Activated T-helper 1 cell treated with anti-CD3 and anti-CD28 coated beads, Interleukin-12 subunit alpha, Interleukin-12 subunit beta, Interleukin-2, Interleukin-4 antibody, amounts not matched to agents 30 ng/mL and 10 ng/mL and 1 ng/mL, durations not matched to agents 14 hours and 24 hours and 36 hours (primary cell): ENCODE measurements at regions of chr4 and their contacts with region 1.

Region 1: DNA sequence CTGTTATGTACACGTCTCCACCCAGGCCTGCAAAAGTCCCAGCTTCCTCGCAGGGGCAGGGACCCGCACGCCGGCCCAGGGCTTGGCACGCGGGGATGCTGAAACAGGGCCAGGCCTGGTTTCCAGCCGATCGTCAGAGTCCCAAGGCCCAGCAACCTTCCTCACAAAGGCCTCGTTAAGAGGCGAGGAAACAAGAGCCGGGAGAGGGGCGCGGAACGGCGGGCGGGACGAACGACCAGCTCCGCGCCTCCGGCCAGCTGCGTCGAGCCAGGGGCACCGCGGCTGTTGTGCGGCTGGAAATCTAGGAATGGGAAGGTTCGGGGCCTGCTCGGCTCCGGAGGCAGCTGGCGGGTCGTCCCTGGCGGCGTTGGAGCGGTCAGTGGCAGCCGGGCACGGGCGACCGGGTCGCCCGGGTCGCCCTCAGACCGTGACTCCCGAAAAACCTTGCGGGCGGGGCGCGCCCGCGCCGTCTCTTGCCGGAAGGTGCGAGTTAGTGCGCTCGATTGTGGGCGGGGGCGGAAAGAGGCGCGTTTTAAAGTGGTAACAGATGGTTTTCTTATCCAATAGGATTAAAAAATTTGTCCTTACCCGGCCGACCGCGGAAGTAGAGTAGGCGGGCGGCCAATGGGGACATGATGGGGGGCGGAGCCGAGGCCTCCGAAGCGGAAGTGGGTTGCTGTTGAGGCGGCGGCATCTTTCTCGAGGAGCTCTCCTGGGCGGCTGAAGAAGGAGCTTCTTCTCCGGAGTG is at the start of gene RNF4:
- DNase-seq: peak; percentile 94
- H3K4me3 Mint-ChIP-seq: peak within 1 kb of the TSS; percentile 95
- H3K27ac Mint-ChIP-seq: peak within 1 kb of the TSS; percentile 96
- H3K4me1 Mint-ChIP-seq: peaks cover 29% of the 10 kb centered on the region
- H3K27me3 Mint-ChIP-seq: peaks cover 1% of the 10 kb centered on the region
- total RNA-seq, gene RNF4: 93.7 and 112 TPM in 2 replicates

Region 2: GRCh38 chr4:1721004-1721665 is 747.5 kb before region 1 on chr4 and contains the starts of genes TACC3 and TMEM129:
- intact Hi-C with region 1: loop called (anchors 2 kb)
- DNase-seq: peak; percentile 90
- H3K4me3 Mint-ChIP-seq: peak within 1 kb of the TSS; percentile 94
- H3K27ac Mint-ChIP-seq: peak within 1 kb of the TSS; percentile 97
- H3K4me1 Mint-ChIP-seq: peaks cover 45% of the 10 kb centered on the region
- H3K27me3 Mint-ChIP-seq: no peaks in the 10 kb centered on the region
- total RNA-seq, gene TACC3: 134 and 139 TPM in 2 replicates
- total RNA-seq, gene TMEM129: 27.4 and 28.4 TPM in 2 replicates

Region 3: DNA sequence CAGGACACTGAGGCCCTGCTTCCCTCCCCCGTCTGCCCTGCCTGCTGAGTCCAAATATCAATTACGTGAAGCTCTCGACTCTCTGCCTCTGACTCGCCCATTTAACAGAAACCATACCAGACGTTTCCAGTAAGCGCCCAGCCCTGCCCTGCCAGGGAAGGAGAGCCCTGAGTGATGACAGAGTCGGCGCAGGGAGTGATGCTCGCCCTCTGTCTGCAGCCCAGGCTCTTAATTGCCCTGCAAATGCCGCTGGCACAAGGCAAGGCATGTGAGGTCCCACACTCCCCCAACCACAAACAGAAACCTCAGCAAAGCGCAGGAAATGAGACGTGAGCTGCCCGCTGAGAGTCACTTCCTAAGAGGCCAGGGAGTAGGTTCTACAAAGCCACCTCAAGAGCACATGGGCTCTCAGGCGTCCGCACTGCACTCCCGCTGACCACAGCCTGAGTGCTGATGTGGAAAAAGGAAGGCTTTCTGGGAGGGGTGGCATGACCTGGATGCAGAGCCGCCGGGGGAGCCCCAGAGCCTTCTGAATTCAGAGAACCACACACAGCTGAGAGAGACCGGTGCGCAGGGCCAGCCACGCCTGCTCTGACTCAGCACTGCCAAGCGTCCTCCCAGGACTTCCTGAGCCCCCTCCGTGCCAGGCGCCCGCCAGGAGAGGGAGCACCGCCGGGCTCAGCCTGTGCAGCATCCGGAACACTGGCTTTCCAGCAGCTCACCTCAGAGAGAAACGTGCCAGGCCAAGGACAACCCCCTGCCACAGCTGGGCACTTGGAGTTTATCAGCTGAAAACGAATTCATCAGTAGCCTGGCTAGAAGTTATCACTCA is 55.5 kb before region 1 on chr4:
- intact Hi-C with region 1: loop called (anchors 1 kb)
- DNase-seq: peak; percentile 88
- H3K4me3 Mint-ChIP-seq: peak overlapping the region; percentile 64
- H3K27ac Mint-ChIP-seq: peak overlapping the region; percentile 93
- H3K4me1 Mint-ChIP-seq: peaks cover 69% of the 10 kb centered on the region
- H3K27me3 Mint-ChIP-seq: peaks cover 16% of the 10 kb centered on the region

Region 4: DNA sequence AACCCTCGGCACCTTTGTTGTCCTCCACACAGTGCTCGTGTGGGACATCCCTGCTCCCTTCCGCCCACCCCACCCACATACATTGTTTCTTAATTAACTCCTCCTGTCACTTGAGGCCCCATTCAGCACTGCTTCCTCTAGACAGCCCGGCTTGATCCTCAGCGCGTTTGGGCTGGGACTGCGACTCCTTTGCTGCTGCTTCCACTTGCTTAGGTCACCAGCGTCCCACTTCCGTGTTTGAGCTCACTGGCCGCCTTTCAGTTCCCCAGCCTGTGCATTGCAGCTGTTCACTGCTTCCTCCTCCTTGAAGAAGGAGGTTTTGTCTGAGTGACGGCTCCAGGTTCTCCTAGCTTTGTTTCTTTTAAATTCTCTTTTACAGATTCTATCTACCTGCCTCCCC is 16.4 kb after region 1 on chr4:
- intact Hi-C with region 1: loop called (anchors 1 kb)
- DNase-seq: peak; percentile 59
- H3K4me3 Mint-ChIP-seq: peak overlapping the region; percentile 41
- H3K27ac Mint-ChIP-seq: peak overlapping the region; percentile 78
- H3K4me1 Mint-ChIP-seq: peaks cover 76% of the 10 kb centered on the region
- H3K27me3 Mint-ChIP-seq: no peaks in the 10 kb centered on the region